Activated CD8-positive, alpha-beta T cell treated with anti-CD3 and anti-CD28 coated beads for 36 hours (primary cell): ENCODE measurements at regions of chr15 and their contacts with region 1.

Region 1: GRCh38 chr15:55649054-55649423 is 60.9 kb upstream of the PYGO1 start:
- DNase-seq: no peak
- ATAC-seq: no peak
- H3K4me3 Mint-ChIP-seq: no peak overlapping the region
- H3K27ac Mint-ChIP-seq: no peak overlapping the region
- H3K4me1 Mint-ChIP-seq: no peaks in the 10 kb centered on the region
- H3K27me3 Mint-ChIP-seq: peaks cover under 1% of the 10 kb centered on the region
- CTCF ChIP-seq: no peak

Region 2: GRCh38 chr15:55799291-55800212 is 150.5 kb after region 1 on chr15:
- CTCF ChIA-PET with region 1: interaction called, 25 read pairs
- POLR2A ChIA-PET with region 1: no interaction called
- intact Hi-C with region 1: no loop called
- DNase-seq: peak; percentile 62
- ATAC-seq: no peak
- H3K4me3 Mint-ChIP-seq: no peak overlapping the region
- H3K27ac Mint-ChIP-seq: no peak overlapping the region
- H3K4me1 Mint-ChIP-seq: no peaks in the 10 kb centered on the region
- H3K27me3 Mint-ChIP-seq: peaks cover 11% of the 10 kb centered on the region
- CTCF ChIP-seq: peak; percentile 54